ENCODE measurements at regions of chr6 and their contacts with region 1.

Region 1: DNA sequence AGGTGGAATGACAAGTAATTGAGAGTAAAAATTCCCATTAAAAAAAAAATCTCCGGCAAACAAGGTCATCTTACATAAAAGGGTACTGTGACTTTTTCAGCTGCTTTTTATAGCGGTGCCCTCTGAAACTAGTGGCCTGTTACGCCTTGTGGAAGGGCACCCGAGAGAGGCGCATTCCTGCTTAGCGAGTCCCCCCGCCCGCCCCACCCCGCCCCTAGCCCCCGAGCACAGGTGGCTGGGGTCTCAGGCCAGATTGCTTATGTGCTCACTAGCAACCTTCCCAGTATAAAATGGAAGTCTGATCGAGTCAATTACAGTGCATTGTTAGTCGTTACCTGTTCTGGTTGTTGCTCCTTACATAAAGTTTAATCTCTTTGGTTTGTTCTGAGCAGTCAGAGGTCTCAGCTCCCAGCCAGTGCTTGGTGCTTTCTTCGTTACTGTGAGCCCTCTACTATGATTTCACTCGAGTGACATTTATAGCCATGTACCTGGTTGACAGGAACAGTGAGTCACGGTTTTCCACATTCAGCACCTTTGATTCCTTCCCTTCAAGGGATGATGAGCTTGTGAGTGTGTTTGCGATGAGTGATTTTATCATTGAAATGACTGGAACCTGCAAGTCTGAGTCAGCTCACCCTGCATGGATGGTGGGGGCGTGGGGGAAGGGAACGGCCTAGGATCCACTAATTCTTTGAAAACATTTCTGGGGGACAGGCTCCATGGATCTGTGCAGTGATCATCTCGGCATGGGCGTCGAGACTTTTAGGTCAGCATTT is 47.6 kb downstream of the ZDHHC14 start:
- DNase-seq: peak; percentile 70
- H3K4me3 Mint-ChIP-seq: peak overlapping the region; percentile 55
- H3K27ac Mint-ChIP-seq: peak overlapping the region; percentile 88
- H3K4me1 Mint-ChIP-seq: peaks cover 43% of the 10 kb centered on the region
- H3K27me3 Mint-ChIP-seq: no peaks in the 10 kb centered on the region

Region 2: DNA sequence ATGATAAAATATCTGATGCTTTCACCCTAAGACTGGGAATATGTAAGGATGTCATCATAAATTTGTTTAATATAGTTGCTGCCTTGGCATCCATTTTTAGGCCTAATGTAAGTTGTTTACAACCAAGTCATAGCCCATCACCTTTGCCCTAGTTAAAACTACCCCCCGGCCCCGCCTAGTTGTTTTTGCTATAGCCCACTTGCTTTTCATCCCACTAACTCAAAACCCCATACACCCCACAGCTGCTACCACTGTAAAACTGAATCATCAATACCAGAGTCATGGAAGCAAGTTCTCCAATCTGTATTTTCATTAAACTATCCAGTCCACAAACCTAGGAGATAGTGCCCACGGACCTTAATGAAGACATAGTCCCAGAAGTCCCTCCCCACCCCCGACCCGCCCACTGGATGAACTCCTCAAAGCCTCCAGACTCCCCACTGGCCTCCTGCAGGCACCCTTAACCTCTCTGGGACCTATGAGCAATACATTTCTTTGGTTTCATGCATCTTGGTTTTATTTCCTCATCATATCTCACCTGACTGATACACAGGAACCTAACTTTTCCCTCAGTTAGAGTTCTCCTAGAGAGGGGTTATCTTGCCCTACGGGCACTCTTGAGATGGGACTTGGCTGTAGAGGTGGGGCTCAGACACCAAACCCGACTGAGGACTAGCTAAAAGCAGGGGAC is 60.1 kb before region 1 on chr6:
- intact Hi-C with region 1: loop called (anchors 1 kb)
- DNase-seq: no peak
- H3K4me3 Mint-ChIP-seq: no peak overlapping the region
- H3K27ac Mint-ChIP-seq: no peak overlapping the region
- H3K4me1 Mint-ChIP-seq: peaks cover 16% of the 10 kb centered on the region
- H3K27me3 Mint-ChIP-seq: peaks cover 59% of the 10 kb centered on the region

Region 3: DNA sequence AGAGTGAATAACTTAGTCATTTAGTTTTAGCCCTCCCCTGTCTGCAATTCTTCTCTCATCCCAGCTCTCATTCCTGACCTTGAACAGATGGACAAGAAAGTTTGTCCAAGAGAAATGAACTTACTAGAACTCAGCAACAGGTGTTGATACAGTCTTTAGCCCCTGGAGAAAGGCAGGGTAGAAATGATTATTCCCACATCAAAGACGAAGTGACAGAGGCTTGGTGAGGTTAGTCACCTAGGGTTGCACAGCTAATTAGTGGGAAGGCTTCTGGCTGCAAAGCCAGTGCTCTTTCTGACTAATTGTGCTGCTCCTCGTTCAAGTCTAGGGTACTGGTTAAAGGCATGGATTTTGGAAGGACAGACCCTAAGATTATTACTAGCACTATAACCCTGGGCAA is 43.1 kb before region 1 on chr6:
- intact Hi-C with region 1: loop called (anchors 1 kb)
- DNase-seq: peak; percentile 68
- H3K4me3 Mint-ChIP-seq: peak overlapping the region; percentile 36
- H3K27ac Mint-ChIP-seq: peak overlapping the region; percentile 12
- H3K4me1 Mint-ChIP-seq: peaks cover 23% of the 10 kb centered on the region
- H3K27me3 Mint-ChIP-seq: peaks cover 3% of the 10 kb centered on the region

Region 4: GRCh38 chr6:157449610-157450009 is 21.0 kb after region 1 on chr6:
- intact Hi-C with region 1: no loop called
- DNase-seq: no peak
- H3K4me3 Mint-ChIP-seq: no peak overlapping the region
- H3K27ac Mint-ChIP-seq: no peak overlapping the region
- H3K4me1 Mint-ChIP-seq: peaks cover 6% of the 10 kb centered on the region
- H3K27me3 Mint-ChIP-seq: no peaks in the 10 kb centered on the region

Region 5: DNA sequence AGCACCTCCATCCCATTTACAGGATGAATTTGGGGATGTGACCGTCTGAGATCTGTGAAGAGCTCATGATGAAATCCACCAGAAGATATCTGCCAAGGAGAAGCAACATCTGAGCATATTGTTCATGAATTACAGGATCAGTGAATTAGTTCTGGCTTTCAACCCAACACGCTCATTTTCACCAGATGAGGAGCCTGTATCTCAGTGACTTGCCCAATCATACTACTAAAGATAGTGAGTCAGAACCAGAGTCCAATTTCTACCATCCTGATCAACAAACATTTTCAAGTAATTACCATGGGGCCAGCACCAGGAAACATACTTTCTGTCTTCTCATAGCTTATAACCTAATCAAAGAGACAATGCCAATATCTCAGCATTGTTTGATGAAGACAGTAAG is 69.0 kb after region 1 on chr6:
- intact Hi-C with region 1: loop called (anchors 5 kb)
- DNase-seq: no peak
- H3K4me3 Mint-ChIP-seq: no peak overlapping the region
- H3K27ac Mint-ChIP-seq: peak overlapping the region; percentile 48
- H3K4me1 Mint-ChIP-seq: peaks cover 27% of the 10 kb centered on the region
- H3K27me3 Mint-ChIP-seq: no peaks in the 10 kb centered on the region

Region 6: DNA sequence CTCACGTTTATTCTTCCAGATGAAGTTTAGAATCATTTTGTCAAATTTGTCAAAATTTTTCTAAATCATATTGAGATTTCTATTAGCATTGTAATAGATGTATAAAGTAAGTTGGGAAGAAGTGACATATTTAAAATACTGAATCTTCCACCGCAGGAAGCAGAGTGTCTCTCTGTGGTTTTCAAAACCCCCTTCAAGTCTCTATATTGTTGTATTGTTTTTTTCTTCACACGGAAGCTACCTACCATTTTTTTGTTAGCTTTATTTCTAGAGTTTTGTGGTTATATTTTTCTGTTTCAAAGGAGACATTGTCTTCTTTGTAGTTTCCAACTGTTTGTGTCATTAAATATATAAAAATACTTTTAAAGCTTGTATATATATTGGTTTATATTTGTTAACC is 140.9 kb after region 1 on chr6:
- intact Hi-C with region 1: loop called (anchors 1 kb)
- DNase-seq: peak; percentile 71
- H3K4me3 Mint-ChIP-seq: peak overlapping the region; percentile 54
- H3K27ac Mint-ChIP-seq: no peak overlapping the region
- H3K4me1 Mint-ChIP-seq: peaks cover 23% of the 10 kb centered on the region
- H3K27me3 Mint-ChIP-seq: peaks cover 5% of the 10 kb centered on the region

Region 7: GRCh38 chr6:157710604-157711003 is 282.0 kb after region 1 on chr6:
- intact Hi-C with region 1: no loop called
- DNase-seq: no peak
- H3K4me3 Mint-ChIP-seq: no peak overlapping the region
- H3K27ac Mint-ChIP-seq: no peak overlapping the region
- H3K4me1 Mint-ChIP-seq: no peaks in the 10 kb centered on the region
- H3K27me3 Mint-ChIP-seq: peaks cover 13% of the 10 kb centered on the region